OCI-LY7 (cell line): ENCODE measurements at regions of chr18 and their contacts with region 1.

Region 1: DNA sequence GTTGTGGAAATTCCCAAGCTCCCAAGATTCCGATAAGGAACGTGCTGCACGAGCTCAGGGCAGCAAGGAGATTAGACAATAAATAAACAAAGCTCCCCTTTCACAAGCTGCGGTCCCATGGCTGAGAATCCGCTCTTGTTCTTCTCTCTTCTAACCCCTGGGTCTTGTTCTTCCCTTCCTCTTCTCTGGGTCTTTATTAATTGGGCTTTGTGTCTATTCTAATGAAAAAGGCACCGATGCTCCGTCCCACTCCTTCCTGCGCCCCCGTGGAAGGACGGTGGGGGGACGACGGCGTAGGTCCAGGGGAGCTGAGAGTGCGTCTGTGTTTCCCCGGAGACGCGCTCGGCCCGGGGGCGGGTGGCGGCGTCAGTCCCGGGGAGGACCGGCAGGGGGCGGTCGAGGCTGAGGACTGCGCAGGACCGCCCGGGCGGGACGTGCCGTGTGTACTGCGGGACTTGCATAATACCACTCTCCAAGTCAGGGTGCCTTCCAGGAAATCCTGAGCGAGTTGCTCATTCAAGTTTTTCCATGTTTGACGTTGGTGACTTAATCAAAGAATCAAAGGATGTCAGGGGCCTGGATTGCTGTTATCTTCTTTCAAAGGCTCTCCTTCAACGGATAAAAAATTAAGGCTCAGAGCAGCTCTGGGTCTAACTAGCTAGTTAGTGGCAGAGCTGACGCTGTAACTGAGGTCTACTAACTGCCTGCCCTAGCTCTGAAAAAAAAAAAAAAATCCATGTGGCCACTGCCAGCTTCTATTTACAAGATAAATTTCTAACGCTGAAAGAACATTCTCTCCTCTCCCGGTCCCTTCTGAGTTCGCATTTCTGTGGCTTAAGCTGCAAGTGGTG is 321.4 kb downstream of the TGIF1 start:
- DNase-seq: peak; percentile 86
- H3K4me3 ChIP-seq: peak overlapping the region; percentile 60
- H3K27ac ChIP-seq: no peak overlapping the region
- H3K4me1 ChIP-seq: peaks cover 24% of the 10 kb centered on the region
- CTCF ChIP-seq: peak; percentile 96

Region 2: GRCh38 chr18:3742221-3742935 is 29.0 kb before region 1 on chr18:
- CTCF ChIA-PET with region 1: no interaction called
- POLR2A ChIA-PET with region 1: no interaction called
- intact Hi-C with region 1: no loop called
- DNase-seq: no peak
- H3K4me3 ChIP-seq: no peak overlapping the region
- H3K27ac ChIP-seq: no peak overlapping the region
- H3K4me1 ChIP-seq: no peaks in the 10 kb centered on the region
- CTCF ChIP-seq: no peak

Region 3: DNA sequence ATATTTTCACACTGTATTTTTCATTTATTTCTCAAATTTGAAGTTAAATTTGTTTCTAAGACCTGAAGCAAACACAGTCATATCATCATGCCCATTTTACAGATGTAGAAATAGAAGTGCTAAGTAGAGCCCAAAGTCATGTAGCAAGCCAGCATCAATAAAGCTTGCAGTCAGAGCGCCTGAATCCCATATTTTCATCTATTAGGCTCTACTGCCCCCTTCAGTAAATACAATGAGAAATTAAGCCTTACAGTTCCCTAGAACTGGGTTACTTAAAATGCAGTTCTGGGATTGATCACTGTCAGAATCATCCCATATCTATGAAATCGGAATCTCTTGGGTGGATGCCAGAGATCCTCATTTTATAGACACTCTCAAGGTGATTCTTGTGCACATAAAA is 98.5 kb after region 1 on chr18:
- CTCF ChIA-PET with region 1: interaction called, 9 read pairs
- POLR2A ChIA-PET with region 1: no interaction called
- intact Hi-C with region 1: loop called (anchors 1 kb)
- DNase-seq: peak; percentile 56
- H3K4me3 ChIP-seq: no peak overlapping the region
- H3K27ac ChIP-seq: no peak overlapping the region
- H3K4me1 ChIP-seq: peaks cover 7% of the 10 kb centered on the region
- CTCF ChIP-seq: peak; percentile 76

Region 4: GRCh38 chr18:4068552-4069158 is 297.3 kb after region 1 on chr18:
- CTCF ChIA-PET with region 1: no interaction called
- POLR2A ChIA-PET with region 1: no interaction called
- intact Hi-C with region 1: loop called (anchors 1 kb)
- DNase-seq: peak; percentile 67
- H3K4me3 ChIP-seq: no peak overlapping the region
- H3K27ac ChIP-seq: no peak overlapping the region
- H3K4me1 ChIP-seq: no peaks in the 10 kb centered on the region
- CTCF ChIP-seq: peak; percentile 94